ENCODE measurements at regions of chr11 and their contacts with region 1.

Region 1: DNA sequence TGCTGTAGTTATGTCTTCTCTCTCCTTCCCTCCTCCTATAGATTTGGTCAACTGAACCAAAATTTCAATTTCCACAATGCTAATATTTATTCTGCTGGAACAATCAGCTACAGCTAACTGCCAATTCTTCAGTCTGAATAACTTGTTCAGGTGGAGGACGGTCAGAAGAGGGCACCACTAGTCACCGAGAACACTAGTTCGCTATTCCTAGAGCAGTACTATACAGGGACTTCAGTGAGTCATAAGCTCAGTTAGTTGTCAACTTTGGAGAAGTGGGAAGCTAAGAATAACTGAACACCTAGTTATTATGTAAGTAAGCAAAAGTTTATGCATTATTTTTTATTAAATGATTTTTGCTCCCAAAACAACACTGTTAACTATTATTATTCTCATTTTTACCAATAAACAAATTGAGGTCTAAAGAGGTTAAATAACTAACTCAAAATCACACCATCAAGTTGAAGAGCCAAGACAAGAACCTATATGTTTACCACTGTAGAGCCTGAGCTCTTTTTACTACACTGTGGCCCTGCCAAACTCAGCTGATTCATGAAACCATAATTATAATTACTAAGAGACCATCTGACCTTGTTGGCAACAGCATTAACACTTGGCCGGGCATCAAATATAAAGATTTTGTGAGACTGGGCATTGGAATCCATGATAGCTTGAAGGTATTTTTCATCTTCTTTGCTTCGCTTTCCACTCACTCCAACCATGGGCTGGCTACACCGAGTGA is 59.0 kb downstream of the CEP57 start:
- DNase-seq: no peak
- H3K4me3 ChIP-seq: no peak overlapping the region
- H3K27ac ChIP-seq: no peak overlapping the region
- H3K4me1 ChIP-seq: no peaks in the 10 kb centered on the region
- H3K27me3 ChIP-seq: no peaks in the 10 kb centered on the region
- CTCF ChIP-seq: peak in 2 of 3 experiments; percentile 17 to 43
- POLR2A ChIP-seq: no peak

Region 2: GRCh38 chr11:95625164-95625900 is 223.9 kb before region 1 on chr11:
- intact Hi-C with region 1: no loop called
- DNase-seq: no peak
- H3K4me3 ChIP-seq: no peak overlapping the region
- H3K27ac ChIP-seq: no peak overlapping the region
- H3K4me1 ChIP-seq: no peaks in the 10 kb centered on the region
- H3K27me3 ChIP-seq: no peaks in the 10 kb centered on the region
- CTCF ChIP-seq: no peak
- POLR2A ChIP-seq: no peak

Region 3: GRCh38 chr11:96342961-96343711 is 493.9 kb after region 1 on chr11 and contains the start of gene MAML2:
- intact Hi-C with region 1: loop called (anchors 10 kb)
- DNase-seq: peak in 1 of 2 donors; percentile 96
- H3K4me3 ChIP-seq: peak within 1 kb of the TSS; percentile 68 to 73
- H3K27ac ChIP-seq: peak within 1 kb of the TSS; percentile 84
- H3K4me1 ChIP-seq: peaks cover 37% of the 10 kb centered on the region
- H3K27me3 ChIP-seq: no peaks in the 10 kb centered on the region
- CTCF ChIP-seq: peak; percentile 78 to 92 (median 89)
- POLR2A ChIP-seq: peak in 1 of 2 donors; percentile 16
- total RNA-seq, gene MAML2: 36.3 TPM

Region 4: DNA sequence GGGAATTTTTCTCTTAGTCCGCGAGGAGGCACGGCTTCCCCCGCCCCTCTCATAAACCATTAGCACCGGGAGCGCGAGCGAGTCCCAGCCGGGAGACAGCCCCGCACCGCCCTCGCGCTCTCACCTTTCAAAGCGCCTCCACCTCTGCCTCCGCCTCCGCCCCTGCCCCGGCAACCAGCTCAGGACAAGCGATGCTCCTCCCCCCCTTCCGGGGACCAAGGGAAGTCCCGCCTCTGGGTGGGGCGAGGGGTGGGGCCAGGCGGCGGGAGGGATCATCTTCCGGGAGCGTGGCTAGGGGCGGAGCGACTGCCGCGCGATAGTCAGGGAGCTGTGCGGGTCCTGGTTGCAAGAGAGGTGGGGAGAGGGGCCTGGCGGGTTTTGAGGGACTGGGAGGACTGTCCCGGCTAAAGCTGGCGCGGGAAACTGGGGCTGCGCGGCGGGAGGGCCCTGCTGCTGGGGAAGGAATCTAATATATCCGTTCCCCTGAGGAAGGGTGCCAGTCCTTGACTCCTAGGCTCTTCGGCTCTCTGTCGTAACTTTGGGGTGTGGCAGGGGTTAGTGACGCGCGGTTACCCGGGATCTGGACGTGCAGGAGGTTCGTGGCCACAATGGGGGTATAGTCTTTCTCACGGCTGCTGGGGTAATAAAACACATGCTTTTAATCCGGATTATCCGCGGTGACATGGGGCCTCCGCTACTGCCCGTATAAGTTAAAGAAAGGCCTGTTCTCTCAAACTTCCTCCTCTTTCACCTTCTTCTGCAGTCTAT is 540.6 kb after region 1 on chr11 and contains the starts of genes CCDC82 and JRKL:
- intact Hi-C with region 1: loop called (anchors 10 kb)
- DNase-seq: peak; percentile 96 to 98
- H3K4me3 ChIP-seq: peak within 1 kb of the TSS; percentile 68 to 92
- H3K27ac ChIP-seq: peak within 1 kb of the TSS; percentile 75
- H3K4me1 ChIP-seq: peaks cover 26% of the 10 kb centered on the region
- H3K27me3 ChIP-seq: no peaks in the 10 kb centered on the region
- CTCF ChIP-seq: peak in 1 of 3 experiments; percentile 10
- POLR2A ChIP-seq: peak in 1 of 2 donors; percentile 83
- total RNA-seq, gene CCDC82: 29.5 TPM
- total RNA-seq, gene JRKL: 5.4 TPM